Left cardiac atrium (tissue), 4 donors: ENCODE measurements at regions of chr6 and their contacts with region 1.

Region 1: GRCh38 chr6:2841264-2842138 is at the start of gene SERPINB1:
- DNase-seq: peak; percentile 95
- ATAC-seq: peak; percentile 90 to 91
- total RNA-seq, gene SERPINB1: 27.5 to 39.2 TPM

Region 2: DNA sequence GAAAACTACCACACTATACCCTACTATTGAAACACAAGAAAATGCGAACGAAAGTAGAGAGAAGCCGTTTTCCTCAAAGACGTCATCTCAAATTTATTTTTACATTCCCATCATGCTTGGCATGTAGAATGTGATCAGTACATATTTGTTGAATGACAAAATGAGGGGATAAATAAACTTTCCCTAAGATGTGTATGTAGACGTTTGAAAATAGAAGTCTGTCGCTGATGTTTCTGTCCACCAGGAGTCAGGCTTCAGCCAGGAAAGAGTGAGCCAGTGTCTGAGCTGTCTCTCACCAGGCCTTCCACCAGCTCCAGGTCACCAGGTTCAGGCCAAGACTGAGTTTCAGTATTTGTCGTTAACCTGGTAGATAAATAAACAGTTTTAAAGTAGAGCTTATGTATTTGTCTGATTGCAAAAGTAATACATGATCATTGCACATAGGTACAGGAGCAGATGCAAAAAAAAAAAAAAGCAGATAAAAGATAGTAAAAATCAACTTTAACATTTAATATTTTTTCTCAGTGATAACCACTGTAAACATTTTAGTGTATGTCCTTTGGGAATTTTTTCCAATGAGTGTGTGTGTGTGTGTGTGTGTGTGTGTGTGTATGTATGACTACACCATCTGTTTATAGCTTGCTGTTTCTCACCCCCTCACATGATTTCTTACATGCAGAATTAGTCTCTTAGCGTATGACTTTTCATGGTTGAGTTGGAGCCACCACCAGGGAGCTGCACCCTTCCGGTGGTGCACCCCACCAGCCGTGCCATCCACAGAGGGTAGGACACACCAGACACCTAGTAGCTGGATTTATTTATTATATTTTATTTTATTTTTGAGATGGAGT is 50.2 kb before region 1 on chr6:
- intact Hi-C with region 1: loop called (anchors 2 to 10 kb)
- DNase-seq: peak; percentile 72
- ATAC-seq: peak; percentile 86 to 87

Region 3: DNA sequence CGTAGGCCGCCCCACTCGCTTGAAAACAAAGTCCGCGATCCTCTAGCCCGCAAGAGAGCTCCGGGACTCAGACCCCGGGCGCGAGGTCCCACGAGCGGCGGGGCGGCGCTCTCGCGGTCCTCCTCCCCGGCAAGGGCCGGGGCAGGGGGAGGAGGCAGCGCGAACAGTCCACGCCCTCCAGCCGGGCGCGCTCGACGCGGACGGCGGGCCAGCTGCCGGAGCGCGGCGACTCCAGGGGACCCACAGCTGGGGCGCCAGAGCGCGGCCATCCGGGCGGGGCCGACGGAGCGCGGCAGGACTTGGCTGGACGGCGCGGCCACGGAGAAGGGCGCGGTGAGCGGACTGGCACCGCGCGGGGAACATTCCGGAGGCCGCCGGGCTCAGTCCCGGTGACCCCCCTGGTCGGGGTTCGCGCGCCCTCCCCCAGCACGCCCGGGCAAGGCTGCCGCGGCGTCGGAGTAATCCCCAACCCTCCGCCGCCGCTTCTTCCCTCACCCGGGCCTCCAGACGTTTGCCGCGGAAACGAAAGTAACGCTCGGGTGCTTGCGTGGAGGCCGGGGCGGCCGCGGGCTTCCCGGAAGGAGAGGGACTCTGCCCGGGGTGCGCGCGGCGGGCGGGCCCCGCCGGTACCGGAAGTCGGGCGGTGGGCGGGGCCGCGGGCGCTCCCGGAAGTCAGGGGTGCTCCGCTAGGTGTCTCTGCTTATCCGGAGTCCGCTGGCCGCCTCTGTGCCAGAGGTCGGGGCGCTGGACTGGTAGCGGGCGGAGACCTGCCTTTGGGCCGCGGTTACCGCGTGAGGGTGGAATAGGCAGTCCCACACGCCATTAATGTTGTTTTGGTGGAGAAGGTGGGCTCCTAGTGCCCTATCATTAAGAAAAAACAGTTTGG is 227.1 kb after region 1 on chr6 and contains the start of gene RIPK1:
- intact Hi-C with region 1: loop called in 1 of 2 experiments (anchors 10 kb)
- DNase-seq: peak; percentile 96
- ATAC-seq: peak; percentile 92 to 93
- total RNA-seq, gene RIPK1: 10.6 to 13.1 TPM